Astrocyte of the cerebellum (primary cell): ENCODE measurements at regions of chr2 and their contacts with region 1.

Region 1: DNA sequence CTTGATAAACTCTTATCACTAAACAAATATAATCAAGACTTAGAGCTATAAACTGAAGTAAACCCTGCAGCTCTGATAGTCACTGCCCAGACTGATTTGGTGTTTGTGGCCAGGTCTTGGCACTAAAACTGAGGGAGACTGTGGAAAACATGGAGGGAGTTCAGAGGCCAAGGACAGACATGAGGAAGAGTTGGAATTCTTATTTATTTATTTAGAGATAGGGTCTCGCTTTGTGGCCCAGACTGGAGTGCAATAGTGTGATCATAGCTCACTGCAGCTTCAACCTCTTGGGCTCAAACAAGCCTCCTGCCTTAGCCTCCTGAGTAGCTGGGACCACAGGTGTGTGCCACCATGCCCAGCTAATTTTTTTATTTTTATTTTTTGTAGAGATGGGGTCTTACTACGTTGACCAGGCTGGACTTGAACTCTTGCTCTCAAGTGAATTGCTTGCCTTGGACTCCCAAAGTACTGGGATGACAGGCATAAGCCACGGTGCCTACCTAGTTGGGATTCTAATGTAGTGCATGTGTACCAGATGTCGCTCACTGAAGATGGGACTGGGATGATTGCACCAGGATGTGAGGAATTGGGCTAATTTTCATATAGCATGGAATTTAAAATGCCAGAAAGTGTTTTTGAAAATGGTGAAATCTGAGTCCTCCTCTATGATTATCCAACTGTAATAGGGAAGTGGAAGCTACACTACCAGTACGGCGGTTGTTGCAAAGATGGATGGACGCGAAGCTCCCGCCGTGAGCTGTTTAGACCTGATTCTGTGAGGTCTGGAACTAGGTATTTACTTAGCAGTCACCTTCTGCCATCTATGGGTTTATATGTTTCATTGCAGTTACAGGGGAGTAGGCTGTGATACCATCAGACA is 52.7 kb upstream of the CTLA4 start:
- DNase-seq: peak; percentile 73
- H3K4me3 ChIP-seq: no peak overlapping the region
- CTCF ChIP-seq: peak; percentile 68

Region 2: GRCh38 chr2:203484266-203485112 is 330.4 kb before region 1 on chr2:
- in situ Hi-C with region 1: loop called (anchors 25 kb)
- DNase-seq: peak; percentile 19
- H3K4me3 ChIP-seq: no peak overlapping the region
- CTCF ChIP-seq: peak; percentile 66

Region 3: DNA sequence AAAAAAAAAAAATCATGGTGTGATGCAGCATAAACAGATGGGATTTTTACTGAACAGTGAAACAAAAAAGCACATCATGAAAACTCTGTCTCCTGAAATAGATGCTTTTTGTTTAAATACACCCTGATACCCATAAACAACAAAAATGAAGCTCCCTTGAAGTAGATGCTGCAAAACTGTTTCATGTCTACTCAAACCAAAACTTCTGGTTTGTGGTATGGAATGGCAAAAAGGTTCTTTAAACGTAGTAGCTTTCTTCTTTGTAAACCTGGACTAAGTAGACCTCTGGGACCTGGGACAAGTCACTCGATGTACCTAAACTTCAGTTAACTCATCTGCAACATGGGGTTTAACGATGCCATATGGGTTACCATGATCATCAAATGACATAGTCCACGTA is 215.4 kb before region 1 on chr2:
- in situ Hi-C with region 1: no loop called
- DNase-seq: no peak
- H3K4me3 ChIP-seq: no peak overlapping the region
- CTCF ChIP-seq: no peak

Region 4: GRCh38 chr2:203846490-203847105 is 31.7 kb after region 1 on chr2:
- in situ Hi-C with region 1: no loop called
- DNase-seq: no peak
- H3K4me3 ChIP-seq: no peak overlapping the region
- CTCF ChIP-seq: no peak

Region 5: DNA sequence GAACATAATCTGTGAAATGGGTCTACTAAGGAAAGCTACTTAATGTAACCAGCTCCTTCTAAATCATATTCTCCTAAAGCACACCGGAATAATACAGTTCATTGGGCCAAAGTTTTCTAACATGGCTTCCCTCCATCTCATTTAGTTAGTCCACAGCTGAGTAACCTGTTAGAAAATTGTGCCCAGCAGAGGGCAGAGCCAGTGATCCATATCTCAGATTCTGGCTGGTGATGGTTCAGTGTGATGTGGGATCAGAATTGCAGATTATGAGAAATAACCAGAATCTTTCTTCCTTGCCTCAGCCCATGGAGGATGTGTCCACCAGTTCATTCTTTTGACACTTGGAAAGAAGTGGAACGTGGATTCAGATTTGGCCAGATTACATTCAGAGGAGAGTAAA is 43.3 kb after region 1 on chr2:
- in situ Hi-C with region 1: no loop called
- DNase-seq: no peak
- H3K4me3 ChIP-seq: no peak overlapping the region
- CTCF ChIP-seq: no peak